Caco-2 (cell line): ENCODE measurements at regions of chr14 and their contacts with region 1.

Region 1: GRCh38 chr14:105093431-105094192 is 28.4 kb upstream of the GPR132 start:
- DNase-seq: peak; percentile 90 to 94
- H3K4me3 ChIP-seq: peak overlapping the region; percentile 81
- H3K4me3 Mint-ChIP-seq: peak overlapping the region; percentile 73
- H3K27ac Mint-ChIP-seq: peak overlapping the region; percentile 67
- H3K4me1 ChIP-seq: peaks cover 50% of the 10 kb centered on the region
- H3K4me1 Mint-ChIP-seq: peaks cover 6% of the 10 kb centered on the region
- H3K27me3 ChIP-seq: no peaks in the 10 kb centered on the region
- H3K27me3 Mint-ChIP-seq: no peaks in the 10 kb centered on the region
- CTCF ChIP-seq: peak; percentile 58 to 74

Region 2: DNA sequence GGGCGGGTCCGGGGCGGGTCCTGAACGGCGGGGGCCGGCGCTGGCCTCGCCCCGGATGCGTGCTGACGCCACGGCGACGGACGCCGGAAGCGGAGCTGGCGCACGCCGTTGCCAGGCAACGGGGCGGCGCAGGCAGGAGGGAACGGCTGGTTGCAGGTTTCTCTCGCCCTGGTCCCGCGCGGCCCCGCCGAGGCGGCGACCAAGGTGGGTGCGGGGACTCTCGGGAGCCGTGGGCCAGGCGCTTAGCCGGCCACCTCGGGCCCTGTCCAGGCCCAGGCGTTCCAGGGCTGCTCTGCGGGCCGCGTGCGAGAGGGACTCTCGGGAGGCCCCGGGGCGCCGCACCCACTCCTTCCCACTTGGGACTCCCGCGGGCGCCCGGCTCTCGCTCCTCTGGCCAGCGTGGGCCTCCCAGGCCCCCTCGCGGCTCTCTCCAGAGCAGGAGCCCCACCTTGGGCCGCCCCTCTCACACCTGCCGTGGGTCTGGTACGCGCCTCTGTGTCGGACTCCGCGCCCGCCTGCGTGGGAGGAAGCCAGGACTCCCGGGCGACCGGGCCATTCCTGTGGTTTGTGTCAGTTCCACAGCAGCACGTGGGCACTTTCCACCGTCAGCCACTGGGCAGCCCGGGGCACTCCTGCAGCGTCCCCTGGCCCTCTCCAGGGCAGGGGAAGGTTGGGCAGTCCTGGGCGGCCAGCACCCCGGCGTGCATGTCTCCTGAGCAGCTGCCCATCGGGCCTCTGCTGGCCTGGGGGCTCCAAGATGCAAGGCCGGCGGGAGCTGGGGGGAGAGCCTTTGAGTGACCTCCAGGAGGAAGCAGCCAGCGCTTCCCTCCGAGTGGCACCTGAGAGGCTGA is 107.7 kb before region 1 on chr14 and contains the start of gene CLBA1:
- CTCF ChIA-PET with region 1: no interaction called
- POLR2A ChIA-PET with region 1: no interaction called
- intact Hi-C with region 1: no loop called
- DNase-seq: peak; percentile 87 to 92
- H3K4me3 ChIP-seq: peak within 1 kb of the TSS; percentile 62
- H3K4me3 Mint-ChIP-seq: peak within 1 kb of the TSS; percentile 66
- H3K27ac Mint-ChIP-seq: peak within 1 kb of the TSS; percentile 53
- H3K4me1 ChIP-seq: 0 out of 2 replicates have a peak, but pooled peaks cover 3% of the 10 kb centered on the region
- H3K4me1 Mint-ChIP-seq: no peaks in the 10 kb centered on the region
- H3K27me3 ChIP-seq: no peaks in the 10 kb centered on the region
- H3K27me3 Mint-ChIP-seq: no peaks in the 10 kb centered on the region
- CTCF ChIP-seq: no peak
- total RNA-seq, gene CLBA1: 3.0 and 3.2 TPM in 2 replicates

Region 3: DNA sequence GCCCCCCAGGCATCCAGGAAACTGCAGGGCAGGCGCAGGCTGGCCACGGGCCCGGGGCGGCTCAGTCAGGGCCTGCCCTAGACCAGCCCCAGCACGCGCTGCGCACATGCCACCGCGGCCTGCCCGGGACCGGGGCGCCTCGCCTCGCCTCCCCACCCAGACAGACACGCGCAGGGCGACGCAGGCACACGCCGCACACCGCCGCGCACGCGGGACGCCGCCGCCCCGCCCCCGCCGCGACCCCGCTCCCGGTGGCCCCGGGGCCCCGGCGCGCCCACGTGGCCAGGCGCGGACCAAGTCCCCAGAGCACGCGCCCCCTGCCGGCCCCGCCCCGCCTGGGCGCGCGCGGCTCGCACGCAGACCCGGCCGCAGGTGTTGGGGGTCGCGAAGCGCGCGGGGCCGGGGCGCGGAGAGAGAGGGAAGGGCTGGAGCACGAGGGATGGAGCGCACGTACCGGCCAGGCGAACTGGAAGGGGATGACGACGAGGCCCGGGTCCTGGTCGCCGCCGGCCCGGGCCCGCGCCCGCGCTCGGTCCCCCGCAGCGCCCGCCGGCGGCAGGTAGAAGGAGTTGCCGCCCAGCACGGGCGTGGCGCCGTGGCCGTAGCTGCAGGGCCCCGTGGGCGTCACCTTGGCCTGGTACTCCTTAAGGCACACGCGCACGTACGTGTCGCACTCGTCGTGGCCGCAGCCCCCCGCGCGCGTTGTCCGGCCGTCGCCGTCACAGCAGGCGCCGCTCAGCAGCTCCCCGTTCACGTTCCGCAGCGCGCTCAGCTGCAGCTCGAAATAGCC is 73.9 kb after region 1 on chr14:
- CTCF ChIA-PET with region 1: interaction called, 4 read pairs
- POLR2A ChIA-PET with region 1: no interaction called
- intact Hi-C with region 1: loop called (anchors 1 kb)
- DNase-seq: peak in 1 of 2 experiments; percentile 66
- H3K4me3 ChIP-seq: peak overlapping the region; percentile 80
- H3K4me3 Mint-ChIP-seq: peak overlapping the region; percentile 64
- H3K27ac Mint-ChIP-seq: no peak overlapping the region
- H3K4me1 ChIP-seq: peaks cover 6% of the 10 kb centered on the region
- H3K4me1 Mint-ChIP-seq: no peaks in the 10 kb centered on the region
- H3K27me3 ChIP-seq: no peaks in the 10 kb centered on the region; the same call in 1 of the 2 replicates
- H3K27me3 Mint-ChIP-seq: no peaks in the 10 kb centered on the region
- CTCF ChIP-seq: no peak